Panc1 (cell line): ENCODE measurements at regions of chr3 and their contacts with region 1.

Region 1: GRCh38 chr3:187714404-187714979 is 12.1 kb upstream of the RTP2 start:
- DNase-seq: peak; percentile 74
- ATAC-seq: peak; percentile 96
- H3K4me3 ChIP-seq: no peak overlapping the region
- H3K27ac ChIP-seq: no peak overlapping the region
- H3K4me1 ChIP-seq: no peaks in the 10 kb centered on the region
- H3K27me3 ChIP-seq: no peaks in the 10 kb centered on the region
- CTCF ChIP-seq: peak; percentile 92

Region 2: GRCh38 chr3:186839874-186840641 is 874.4 kb before region 1 on chr3:
- CTCF ChIA-PET with region 1: no interaction called
- POLR2A ChIA-PET with region 1: no interaction called
- in situ Hi-C with region 1: no loop called
- intact Hi-C with region 1: loop called (anchors 10 kb)
- DNase-seq: no peak
- ATAC-seq: no peak
- H3K4me3 ChIP-seq: no peak overlapping the region
- H3K27ac ChIP-seq: no peak overlapping the region
- H3K4me1 ChIP-seq: no peaks in the 10 kb centered on the region
- H3K27me3 ChIP-seq: peaks cover 2% of the 10 kb centered on the region
- CTCF ChIP-seq: no peak

Region 3: DNA sequence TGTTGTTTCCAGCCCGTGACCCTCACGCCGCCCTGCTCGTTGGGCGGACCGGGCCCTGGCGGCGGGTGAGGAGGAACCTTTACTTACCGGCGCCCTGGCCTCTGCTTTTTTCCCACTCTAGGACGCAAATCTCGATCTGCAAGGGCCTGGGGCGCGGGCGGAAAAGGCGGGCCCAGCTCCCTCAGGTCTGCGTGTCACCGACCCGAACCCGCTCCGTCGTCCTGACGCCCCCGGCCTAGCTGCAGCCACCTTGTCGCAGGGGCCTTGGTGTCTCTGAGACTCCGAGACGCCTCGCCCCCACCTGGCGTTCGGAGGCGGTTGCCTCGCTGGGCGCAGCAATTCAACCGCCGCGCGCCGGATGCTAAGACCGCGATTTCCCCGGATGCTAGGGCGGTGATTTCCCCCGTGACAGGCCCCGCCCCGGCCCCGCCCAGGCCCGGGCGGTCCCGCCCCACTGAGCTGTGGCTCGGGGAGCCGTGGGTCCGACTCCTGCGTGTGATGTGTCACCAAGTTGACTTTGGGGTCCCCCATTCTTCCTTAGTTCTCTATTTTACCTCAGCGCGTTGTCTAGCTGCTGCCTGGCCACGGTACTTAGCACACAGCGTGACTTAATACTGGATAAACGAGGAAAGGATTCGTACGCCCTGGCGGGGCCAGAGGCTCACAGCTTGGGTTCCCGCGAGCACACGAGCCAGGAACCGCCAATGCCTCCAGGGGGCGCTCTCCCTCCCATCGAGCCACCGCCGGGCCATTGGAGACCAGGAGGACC is 575.2 kb before region 1 on chr3 and contains the start of gene RPL39L:
- CTCF ChIA-PET with region 1: no interaction called
- POLR2A ChIA-PET with region 1: interaction called, 10 read pairs
- in situ Hi-C with region 1: no loop called
- intact Hi-C with region 1: no loop called
- DNase-seq: peak; percentile 77
- ATAC-seq: peak; percentile 98
- H3K4me3 ChIP-seq: peak within 1 kb of the TSS; percentile 48 to 71
- H3K27ac ChIP-seq: peak within 1 kb of the TSS; percentile 60; the same call in 1 of the 2 replicates
- H3K4me1 ChIP-seq: no peaks in the 10 kb centered on the region
- H3K27me3 ChIP-seq: no peaks in the 10 kb centered on the region
- CTCF ChIP-seq: peak; percentile 95
- total RNA-seq, gene RPL39L: 37.7 TPM

Region 4: DNA sequence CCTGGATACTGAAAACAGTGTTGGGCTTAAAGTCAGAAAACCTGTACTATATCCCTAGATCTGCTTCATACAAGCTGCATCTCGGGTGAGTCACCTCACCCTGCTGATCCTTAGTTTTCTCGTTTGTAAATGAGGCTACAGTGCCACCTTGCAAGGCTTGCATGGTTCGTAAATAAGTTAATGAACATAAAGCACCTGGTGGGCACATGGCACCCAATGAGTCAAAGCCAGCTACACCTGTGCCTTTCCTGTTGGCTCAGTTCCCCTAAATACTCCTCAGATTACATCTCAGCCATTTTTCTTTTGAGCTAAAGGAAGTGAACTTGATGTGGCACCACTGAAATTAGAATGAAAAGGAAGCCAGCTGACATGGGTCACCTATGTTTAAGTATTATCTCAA is 490.7 kb before region 1 on chr3:
- CTCF ChIA-PET with region 1: interaction called, 13 read pairs
- POLR2A ChIA-PET with region 1: interaction called, 3 read pairs
- in situ Hi-C with region 1: no loop called
- intact Hi-C with region 1: loop called (anchors 2 kb)
- DNase-seq: no peak
- ATAC-seq: no peak
- H3K4me3 ChIP-seq: no peak overlapping the region
- H3K27ac ChIP-seq: no peak overlapping the region
- H3K4me1 ChIP-seq: no peaks in the 10 kb centered on the region
- H3K27me3 ChIP-seq: no peaks in the 10 kb centered on the region
- CTCF ChIP-seq: no peak

Region 5: DNA sequence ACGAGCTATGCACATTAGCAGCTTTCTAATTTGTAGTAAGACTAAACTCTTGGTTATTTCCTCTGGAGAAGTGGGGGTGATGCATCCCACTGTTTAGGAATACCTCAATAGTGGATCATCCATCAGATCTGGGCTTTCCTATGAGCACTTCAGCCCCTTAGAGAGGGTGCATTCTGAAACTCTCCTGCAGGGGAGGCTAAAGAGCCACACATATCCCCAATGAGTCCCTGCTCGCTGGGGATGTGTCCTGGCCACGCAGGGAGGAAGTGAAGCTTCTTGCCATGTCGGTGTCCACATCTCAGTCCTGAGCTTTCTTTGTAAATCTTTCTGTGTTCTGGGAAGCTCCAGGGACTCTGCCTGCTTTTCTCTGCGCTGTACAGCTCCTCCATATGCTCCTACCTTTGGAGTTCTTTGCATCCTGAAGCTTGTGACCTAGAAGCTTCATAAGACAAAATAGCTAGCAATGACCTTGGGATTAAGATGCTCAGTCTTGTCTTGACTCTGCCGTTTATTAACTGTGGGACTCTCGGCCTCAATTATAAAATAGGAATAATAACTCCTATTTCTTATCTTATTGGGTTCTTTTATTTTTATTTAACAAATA is 394.7 kb before region 1 on chr3:
- CTCF ChIA-PET with region 1: interaction called, 3 read pairs
- POLR2A ChIA-PET with region 1: no interaction called
- in situ Hi-C with region 1: no loop called
- intact Hi-C with region 1: loop called (anchors 1 kb)
- DNase-seq: peak; percentile 73
- ATAC-seq: peak; percentile 92
- H3K4me3 ChIP-seq: no peak overlapping the region
- H3K27ac ChIP-seq: peak overlapping the region; percentile 83
- H3K4me1 ChIP-seq: peaks cover 15% of the 10 kb centered on the region
- H3K27me3 ChIP-seq: peaks cover 7% of the 10 kb centered on the region; the same call in 1 of the 2 replicates
- CTCF ChIP-seq: peak; percentile 97

Region 6: GRCh38 chr3:187616307-187616972 is 98.1 kb before region 1 on chr3:
- CTCF ChIA-PET with region 1: no interaction called
- POLR2A ChIA-PET with region 1: no interaction called
- in situ Hi-C with region 1: no loop called
- intact Hi-C with region 1: loop called (anchors 1 kb)
- DNase-seq: peak; percentile 18
- ATAC-seq: peak; percentile 79; the same call in 1 of the 2 replicates
- H3K4me3 ChIP-seq: no peak overlapping the region
- H3K27ac ChIP-seq: 0 out of 2 replicates have a peak overlapping the region, but pooled peaks have one; percentile 20
- H3K4me1 ChIP-seq: no peaks in the 10 kb centered on the region
- H3K27me3 ChIP-seq: no peaks in the 10 kb centered on the region
- CTCF ChIP-seq: peak; percentile 87

Region 7: DNA sequence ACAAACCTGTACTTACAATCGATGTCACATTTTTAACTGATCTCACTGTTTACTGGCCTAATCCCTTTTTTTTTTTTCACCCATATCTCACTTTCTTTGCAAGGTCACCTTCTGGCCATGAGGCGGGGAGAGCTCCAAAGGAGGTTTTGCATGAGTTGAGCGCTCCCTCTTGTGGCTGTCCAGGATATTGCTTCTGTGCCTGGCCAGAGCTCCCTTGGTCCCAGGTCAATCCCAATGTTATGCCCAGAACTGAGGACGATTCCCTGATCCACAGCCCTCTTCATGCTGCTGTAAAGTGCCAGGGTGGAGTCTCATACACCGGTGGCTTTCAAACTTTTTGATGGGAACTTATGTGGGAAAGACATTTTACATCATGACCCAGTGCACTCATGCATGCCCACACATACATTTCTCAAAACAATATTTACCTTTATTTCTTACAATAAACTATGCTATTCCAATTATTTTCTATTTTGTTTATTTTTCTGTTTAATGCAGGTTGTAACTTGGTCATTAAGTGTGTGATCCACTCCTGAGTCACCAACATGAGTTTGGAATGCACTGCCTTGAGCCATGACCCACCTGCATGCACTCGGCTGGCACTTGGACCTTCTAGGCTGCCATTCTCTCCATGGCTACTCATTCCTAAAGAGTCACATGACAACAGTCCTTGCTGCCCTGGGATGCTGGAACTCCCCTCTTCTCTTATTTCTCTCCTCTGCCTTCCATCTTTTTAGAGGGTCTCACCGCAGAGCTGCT is 34.7 kb before region 1 on chr3:
- CTCF ChIA-PET with region 1: interaction called, 4 read pairs
- POLR2A ChIA-PET with region 1: no interaction called
- in situ Hi-C with region 1: no loop called
- intact Hi-C with region 1: loop called (anchors 1 kb)
- DNase-seq: peak; percentile 62
- ATAC-seq: peak; percentile 93
- H3K4me3 ChIP-seq: no peak overlapping the region
- H3K27ac ChIP-seq: peak overlapping the region; percentile 59
- H3K4me1 ChIP-seq: peaks cover 9% of the 10 kb centered on the region; the same call in 1 of the 2 replicates
- H3K27me3 ChIP-seq: peaks cover 2% of the 10 kb centered on the region; the same call in 1 of the 2 replicates
- CTCF ChIP-seq: peak; percentile 95

Region 8: DNA sequence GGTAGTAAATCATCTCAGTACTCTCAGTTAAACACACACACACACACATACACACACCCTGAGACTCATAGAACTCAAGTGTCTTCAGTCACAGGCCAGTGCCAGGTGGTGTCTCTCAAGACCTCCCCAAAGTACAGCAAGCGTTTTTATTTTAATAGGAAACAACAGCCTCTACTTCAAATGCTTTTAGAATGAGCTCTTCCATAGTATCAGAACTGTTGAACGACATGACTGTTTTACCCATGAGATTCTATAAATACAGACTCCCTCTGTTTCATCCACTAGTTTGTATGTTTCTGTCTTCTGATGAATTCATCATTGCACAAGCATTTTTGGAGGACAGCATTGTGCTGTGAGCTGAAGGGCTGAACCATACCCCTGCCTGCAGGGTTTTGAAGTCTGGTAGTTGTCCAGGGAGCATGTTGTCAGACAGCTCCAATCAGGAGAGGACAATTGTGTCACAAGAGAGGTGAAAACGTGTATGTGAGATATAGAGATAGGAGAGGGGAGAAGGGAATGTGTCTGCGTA is 231.7 kb after region 1 on chr3:
- CTCF ChIA-PET with region 1: no interaction called
- POLR2A ChIA-PET with region 1: no interaction called
- in situ Hi-C with region 1: no loop called
- intact Hi-C with region 1: no loop called
- DNase-seq: no peak
- ATAC-seq: no peak; the same call in 1 of the 2 replicates
- H3K4me3 ChIP-seq: no peak overlapping the region
- H3K27ac ChIP-seq: no peak overlapping the region
- H3K4me1 ChIP-seq: no peaks in the 10 kb centered on the region
- H3K27me3 ChIP-seq: no peaks in the 10 kb centered on the region
- CTCF ChIP-seq: no peak